Left ventricle myocardium inferior (tissue), 1 donor: ENCODE measurements at regions of chr6 and their contacts with region 1.

Region 1: DNA sequence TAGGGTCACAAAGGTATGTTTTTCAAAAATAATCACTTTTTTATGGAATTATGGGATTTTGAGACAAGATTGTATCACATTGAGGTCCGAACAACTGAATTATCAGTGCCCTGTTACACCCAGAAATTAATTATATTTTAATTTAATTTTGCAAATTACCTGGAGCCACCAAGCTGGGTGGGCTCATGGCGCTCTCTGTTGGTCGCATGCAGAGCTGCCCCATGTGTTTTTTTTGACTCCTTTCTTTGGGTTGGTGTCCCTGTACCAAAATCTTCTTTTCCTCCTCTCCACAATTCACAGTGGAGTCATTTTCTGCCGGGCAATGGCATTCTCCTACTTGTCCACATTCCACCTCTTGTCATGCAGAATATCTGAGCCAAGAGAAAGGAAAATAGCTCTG is 38.9 kb upstream of the FRMD1 start:
- DNase-seq: no peak
- H3K4me3 ChIP-seq: no peak overlapping the region
- H3K27ac ChIP-seq: no peak overlapping the region
- H3K4me1 ChIP-seq: peaks cover 5% of the 10 kb centered on the region
- H3K27me3 ChIP-seq: no peaks in the 10 kb centered on the region
- CTCF ChIP-seq: peak; percentile 74

Region 2: DNA sequence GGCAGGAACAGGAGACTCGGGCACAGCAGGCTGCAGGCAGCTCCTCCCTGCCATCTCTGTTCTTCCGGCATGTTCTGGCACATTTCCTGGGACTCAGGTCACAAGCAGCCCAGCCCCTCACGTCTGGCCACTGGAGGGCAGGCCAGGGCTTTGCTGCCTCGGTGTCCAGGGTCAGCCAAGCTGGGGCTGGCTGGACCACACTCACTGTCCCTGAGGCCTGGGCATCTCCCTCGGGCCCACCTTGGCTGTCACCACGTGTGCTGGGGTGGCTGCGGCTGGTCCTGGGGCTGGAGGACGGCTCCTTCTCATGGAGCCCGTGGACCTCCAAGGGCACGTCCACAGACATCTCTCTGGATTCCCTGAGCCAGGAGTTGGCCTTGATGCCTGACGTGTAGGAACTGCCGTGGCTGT is 57.4 kb before region 1 on chr6:
- intact Hi-C with region 1: loop called (anchors 10 kb)
- DNase-seq: peak; percentile 72
- H3K4me3 ChIP-seq: no peak overlapping the region
- H3K27ac ChIP-seq: no peak overlapping the region
- H3K4me1 ChIP-seq: peaks cover 24% of the 10 kb centered on the region
- H3K27me3 ChIP-seq: no peaks in the 10 kb centered on the region
- CTCF ChIP-seq: peak; percentile 83

Region 3: DNA sequence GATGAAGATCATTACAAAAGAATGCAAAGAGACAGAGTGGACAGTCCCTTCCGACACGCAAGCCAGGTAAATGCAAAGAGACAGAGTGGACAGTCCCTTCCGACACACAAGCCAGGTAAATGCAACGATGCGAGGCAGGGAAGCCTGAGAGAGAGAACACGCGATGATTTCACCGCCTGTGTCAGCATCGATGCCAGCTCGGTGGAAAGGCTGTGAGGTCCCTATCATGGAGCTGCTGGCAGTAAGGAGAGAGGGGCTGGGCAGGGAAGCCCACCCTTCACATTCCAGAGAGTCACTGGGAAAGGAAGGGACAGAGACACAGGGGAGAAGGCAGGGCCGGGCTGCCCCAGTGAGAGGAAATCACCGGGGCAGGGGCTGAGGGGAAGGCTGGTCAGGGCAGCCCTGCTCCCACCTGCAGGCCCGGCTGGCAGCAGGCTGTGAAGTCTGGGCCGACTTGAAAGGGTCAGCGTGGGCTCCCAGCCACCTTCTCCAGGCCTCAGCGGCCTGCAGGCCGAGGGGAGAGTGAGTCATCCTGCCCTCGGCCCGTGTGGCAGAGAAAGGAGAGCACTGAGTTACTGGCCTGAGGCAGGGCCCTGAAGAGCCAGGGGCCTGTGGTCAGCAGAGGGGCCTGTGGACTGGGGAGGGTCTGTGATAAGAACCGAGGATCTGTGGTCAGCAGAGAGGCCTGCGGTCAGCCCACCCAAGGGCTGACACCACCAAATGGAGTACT is 121.3 kb after region 1 on chr6:
- intact Hi-C with region 1: no loop called
- DNase-seq: no peak
- H3K4me3 ChIP-seq: no peak overlapping the region
- H3K27ac ChIP-seq: no peak overlapping the region
- H3K4me1 ChIP-seq: peaks cover 12% of the 10 kb centered on the region
- H3K27me3 ChIP-seq: peaks cover 23% of the 10 kb centered on the region
- CTCF ChIP-seq: no peak

Region 4: GRCh38 chr6:169070506-169071176 is 952.7 kb after region 1 on chr6:
- intact Hi-C with region 1: no loop called
- DNase-seq: peak; percentile 67
- H3K4me3 ChIP-seq: no peak overlapping the region
- H3K27ac ChIP-seq: peak overlapping the region; percentile 67
- H3K4me1 ChIP-seq: peaks cover 5% of the 10 kb centered on the region
- H3K27me3 ChIP-seq: peaks cover 30% of the 10 kb centered on the region
- CTCF ChIP-seq: no peak